ENCODE measurements at regions of chr6 and their contacts with region 1.

Region 1: GRCh38 chr6:157981395-157982296 is at the start of gene SYNJ2:
- DNase-seq: peak; percentile 90
- ATAC-seq: peak; percentile 84
- H3K4me3 Mint-ChIP-seq: peak within 1 kb of the TSS; percentile 91
- H3K27ac Mint-ChIP-seq: peak within 1 kb of the TSS; percentile 93
- H3K4me1 Mint-ChIP-seq: peaks cover 42% of the 10 kb centered on the region
- H3K27me3 Mint-ChIP-seq: peaks cover 1% of the 10 kb centered on the region
- total RNA-seq, gene SYNJ2: 28.6 to 30.1 TPM

Region 2: DNA sequence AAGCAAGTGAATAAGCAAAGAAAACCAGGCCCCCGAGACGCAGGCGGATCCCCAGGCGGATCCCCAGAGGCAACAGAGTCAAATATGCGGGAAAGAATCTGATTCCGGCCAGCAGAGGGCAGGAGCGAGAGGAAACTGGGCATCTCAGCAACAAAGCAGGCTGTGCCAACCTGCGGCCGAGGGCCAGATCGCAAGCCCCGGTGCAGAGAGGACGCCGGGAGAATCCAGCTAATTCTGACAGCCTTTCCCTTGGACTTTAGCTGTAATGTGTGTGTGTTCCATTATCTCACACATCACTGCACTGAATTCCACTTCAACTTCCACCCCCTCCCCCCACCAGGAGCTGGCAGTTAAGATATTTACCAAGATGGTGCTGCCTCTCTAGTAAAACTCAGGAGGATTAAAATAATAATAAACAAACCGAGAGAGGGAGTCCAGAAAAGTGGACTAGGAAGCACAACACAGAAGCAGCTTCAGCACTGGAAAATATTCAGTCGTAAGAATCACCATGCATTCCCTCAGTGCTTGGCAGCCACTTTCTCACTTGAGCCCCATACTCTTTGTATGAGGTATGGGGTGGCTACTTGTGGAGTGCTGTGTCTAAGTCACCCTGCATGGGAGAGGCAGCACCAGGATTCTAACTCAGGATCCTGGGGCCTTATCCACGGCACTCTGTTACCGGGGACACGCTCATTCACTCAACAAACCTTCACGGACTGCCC is 224.8 kb before region 1 on chr6:
- CTCF ChIA-PET with region 1: no interaction called
- POLR2A ChIA-PET with region 1: no interaction called
- intact Hi-C with region 1: loop called (anchors 5 kb)
- DNase-seq: peak; percentile 91
- ATAC-seq: peak; percentile 23
- H3K4me3 Mint-ChIP-seq: peak overlapping the region; percentile 48
- H3K27ac Mint-ChIP-seq: peak overlapping the region; percentile 87
- H3K4me1 Mint-ChIP-seq: peaks cover 94% of the 10 kb centered on the region
- H3K27me3 Mint-ChIP-seq: peaks cover 5% of the 10 kb centered on the region

Region 3: GRCh38 chr6:157879873-157880254 is 101.8 kb before region 1 on chr6:
- CTCF ChIA-PET with region 1: no interaction called
- POLR2A ChIA-PET with region 1: interaction called, 4 read pairs
- intact Hi-C with region 1: loop called in 1 of 2 experiments (anchors 5 kb)
- DNase-seq: no peak
- ATAC-seq: no peak
- H3K4me3 Mint-ChIP-seq: no peak overlapping the region
- H3K27ac Mint-ChIP-seq: peak overlapping the region; percentile 21
- H3K4me1 Mint-ChIP-seq: peaks cover 79% of the 10 kb centered on the region
- H3K27me3 Mint-ChIP-seq: no peaks in the 10 kb centered on the region

Region 4: GRCh38 chr6:157962601-157963302 is 18.9 kb before region 1 on chr6:
- CTCF ChIA-PET with region 1: interaction called, 3 read pairs
- POLR2A ChIA-PET with region 1: no interaction called
- intact Hi-C with region 1: loop called in 1 of 2 experiments (anchors 2 kb)
- DNase-seq: peak; percentile 54
- ATAC-seq: peak; percentile 86
- H3K4me3 Mint-ChIP-seq: peak overlapping the region; percentile 43
- H3K27ac Mint-ChIP-seq: peak overlapping the region; percentile 92
- H3K4me1 Mint-ChIP-seq: peaks cover 28% of the 10 kb centered on the region
- H3K27me3 Mint-ChIP-seq: peaks cover 1% of the 10 kb centered on the region

Region 5: GRCh38 chr6:158057213-158057987 is 75.8 kb after region 1 on chr6:
- CTCF ChIA-PET with region 1: no interaction called
- POLR2A ChIA-PET with region 1: no interaction called
- intact Hi-C with region 1: loop called in 1 of 2 experiments (anchors 2 kb)
- DNase-seq: peak; percentile 76
- ATAC-seq: peak; percentile 97
- H3K4me3 Mint-ChIP-seq: no peak overlapping the region
- H3K27ac Mint-ChIP-seq: peak overlapping the region; percentile 59
- H3K4me1 Mint-ChIP-seq: peaks cover 59% of the 10 kb centered on the region
- H3K27me3 Mint-ChIP-seq: no peaks in the 10 kb centered on the region

Region 6: GRCh38 chr6:158168040-158168289 is 186.3 kb after region 1 on chr6 and contains the start of gene SERAC1:
- CTCF ChIA-PET with region 1: no interaction called
- POLR2A ChIA-PET with region 1: no interaction called
- intact Hi-C with region 1: loop called in 1 of 2 experiments (anchors 2 kb)
- DNase-seq: no peak
- ATAC-seq: peak; percentile 30
- H3K4me3 Mint-ChIP-seq: peak within 1 kb of the TSS; percentile 89
- H3K27ac Mint-ChIP-seq: peak within 1 kb of the TSS; percentile 95
- H3K4me1 Mint-ChIP-seq: peaks cover 21% of the 10 kb centered on the region
- H3K27me3 Mint-ChIP-seq: no peaks in the 10 kb centered on the region
- total RNA-seq, gene SERAC1: 3.9 to 5.7 TPM

Measured in activated CD4-positive, alpha-beta T cell treated with anti-CD3 and anti-CD28 coated beads for 36 hours (primary cell).